ENCODE measurements at regions of chr15 and their contacts with region 1.

Region 1: DNA sequence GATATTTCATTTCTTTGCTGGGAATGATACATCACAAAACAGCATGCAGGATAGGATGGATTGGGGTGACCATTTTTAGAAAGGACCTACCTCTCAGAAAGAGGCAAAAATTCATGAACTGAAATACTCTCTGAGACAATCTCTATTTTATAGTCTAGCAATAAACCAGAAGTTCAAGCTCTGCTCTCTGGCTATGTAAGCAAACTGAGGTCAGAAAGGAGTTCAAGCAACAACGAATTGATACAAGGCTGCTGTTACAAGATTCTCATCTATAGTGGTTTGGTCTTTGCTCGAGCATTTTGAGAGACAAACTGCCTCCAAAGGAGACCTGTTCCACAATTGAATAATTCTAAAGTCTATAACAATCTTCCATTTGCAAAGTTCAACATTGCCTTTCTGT is 84.7 kb upstream of the GOLGA8J start:
- DNase-seq: no peak
- ATAC-seq: no peak
- H3K4me3 ChIP-seq: no peak overlapping the region
- H3K27ac ChIP-seq: no peak overlapping the region
- H3K4me1 ChIP-seq: no peaks in the 10 kb centered on the region
- H3K27me3 ChIP-seq: no peaks in the 10 kb centered on the region
- CTCF ChIP-seq: no peak
- POLR2A ChIP-seq: no peak

Region 2: DNA sequence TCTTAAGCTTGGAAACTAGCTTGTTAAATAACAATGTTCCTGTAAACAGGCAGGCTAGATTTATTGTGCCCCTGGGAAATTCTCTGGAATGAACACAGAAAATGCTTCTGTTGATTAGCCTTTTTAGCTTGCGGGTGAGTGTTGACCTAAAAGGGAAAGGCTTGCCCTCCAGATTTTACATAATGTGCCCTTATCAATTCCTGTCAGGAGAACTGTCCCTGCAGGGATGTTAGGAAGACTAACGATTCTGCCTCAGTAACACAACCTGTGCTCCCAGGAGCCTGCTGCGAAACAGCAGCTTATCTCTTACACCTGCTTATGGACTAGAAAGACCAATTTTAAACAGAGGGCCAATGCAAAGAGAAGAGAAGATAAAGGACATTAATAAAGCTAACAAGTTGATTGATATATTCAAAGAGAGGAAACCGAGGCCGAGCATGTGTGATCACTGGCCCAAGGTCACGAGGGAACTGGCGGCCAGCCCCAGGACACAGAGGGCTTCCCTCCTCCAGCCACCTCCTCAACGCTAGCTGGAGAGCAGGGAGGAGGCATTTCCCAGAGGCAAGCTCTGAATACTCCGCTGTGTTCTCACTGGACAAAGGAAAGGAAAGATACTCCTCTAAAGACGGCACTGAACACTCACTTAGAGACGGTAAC is 127.4 kb before region 1 on chr15:
- intact Hi-C with region 1: no loop called
- DNase-seq: peak in 4 of 5 donors; percentile 52 to 67 (median 58)
- ATAC-seq: peak; percentile 69 to 86 (median 74)
- H3K4me3 ChIP-seq: peak overlapping the region in 6 of 12 donors; percentile 3 to 32 (median 20)
- H3K27ac ChIP-seq: peak overlapping the region; percentile 56 to 89 (median 77)
- H3K4me1 ChIP-seq: peaks cover 0 to 48% (median 33%) of the 10 kb centered on the region in 12 donors
- H3K27me3 ChIP-seq: no peaks in the 10 kb centered on the region
- CTCF ChIP-seq: no peak
- POLR2A ChIP-seq: no peak

Region 3: GRCh38 chr15:29959384-29960137 is 38.5 kb before region 1 on chr15:
- intact Hi-C with region 1: loop called in 1 of 10 experiments (anchors 5 kb)
- DNase-seq: no peak
- ATAC-seq: no peak
- H3K4me3 ChIP-seq: no peak overlapping the region
- H3K27ac ChIP-seq: no peak overlapping the region
- H3K4me1 ChIP-seq: no peaks in the 10 kb centered on the region
- H3K27me3 ChIP-seq: peaks cover 0 to 18% (median 0%) of the 10 kb centered on the region in 9 donors
- CTCF ChIP-seq: no peak
- POLR2A ChIP-seq: no peak